Calu3 (cell line): ENCODE measurements at regions of chr12 and their contacts with region 1.

Region 1: GRCh38 chr12:98883231-98883630 is 238.1 kb downstream of the APAF1 start:
- DNase-seq: no peak
- H3K4me3 Mint-ChIP-seq: no peak overlapping the region
- H3K27ac Mint-ChIP-seq: no peak overlapping the region
- H3K4me1 Mint-ChIP-seq: no peaks in the 10 kb centered on the region
- H3K27me3 Mint-ChIP-seq: peaks cover 52% of the 10 kb centered on the region
- CTCF ChIP-seq: no peak

Region 2: DNA sequence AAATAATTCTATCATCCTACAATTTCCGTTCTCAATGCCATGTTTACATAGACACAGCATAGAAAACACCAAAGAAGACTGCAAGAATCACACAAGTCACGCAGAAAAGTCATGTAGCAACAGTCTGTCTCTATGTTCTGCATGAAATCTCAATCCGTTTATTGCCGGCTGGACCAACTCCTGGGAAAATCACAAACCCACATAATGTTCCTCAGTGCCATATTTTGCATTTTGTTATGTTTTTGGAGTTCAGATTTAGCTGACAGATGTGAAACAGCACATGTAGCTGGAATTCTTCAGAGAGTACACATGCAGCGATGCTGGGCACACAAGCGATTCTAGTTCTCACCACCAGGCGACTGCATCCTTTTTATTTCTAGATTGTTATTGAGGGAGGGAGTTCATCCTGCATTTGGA is 45.0 kb before region 1 on chr12:
- CTCF ChIA-PET with region 1: no interaction called
- intact Hi-C with region 1: loop called (anchors 5 kb)
- DNase-seq: no peak
- H3K4me3 Mint-ChIP-seq: no peak overlapping the region
- H3K27ac Mint-ChIP-seq: no peak overlapping the region
- H3K4me1 Mint-ChIP-seq: no peaks in the 10 kb centered on the region
- H3K27me3 Mint-ChIP-seq: peaks cover 97% of the 10 kb centered on the region
- CTCF ChIP-seq: no peak